Activated B cell treated with CpG ODN at 0.5 μM for 24 hours (primary cell): ENCODE measurements at regions of chr2 and their contacts with region 1.

Region 1: DNA sequence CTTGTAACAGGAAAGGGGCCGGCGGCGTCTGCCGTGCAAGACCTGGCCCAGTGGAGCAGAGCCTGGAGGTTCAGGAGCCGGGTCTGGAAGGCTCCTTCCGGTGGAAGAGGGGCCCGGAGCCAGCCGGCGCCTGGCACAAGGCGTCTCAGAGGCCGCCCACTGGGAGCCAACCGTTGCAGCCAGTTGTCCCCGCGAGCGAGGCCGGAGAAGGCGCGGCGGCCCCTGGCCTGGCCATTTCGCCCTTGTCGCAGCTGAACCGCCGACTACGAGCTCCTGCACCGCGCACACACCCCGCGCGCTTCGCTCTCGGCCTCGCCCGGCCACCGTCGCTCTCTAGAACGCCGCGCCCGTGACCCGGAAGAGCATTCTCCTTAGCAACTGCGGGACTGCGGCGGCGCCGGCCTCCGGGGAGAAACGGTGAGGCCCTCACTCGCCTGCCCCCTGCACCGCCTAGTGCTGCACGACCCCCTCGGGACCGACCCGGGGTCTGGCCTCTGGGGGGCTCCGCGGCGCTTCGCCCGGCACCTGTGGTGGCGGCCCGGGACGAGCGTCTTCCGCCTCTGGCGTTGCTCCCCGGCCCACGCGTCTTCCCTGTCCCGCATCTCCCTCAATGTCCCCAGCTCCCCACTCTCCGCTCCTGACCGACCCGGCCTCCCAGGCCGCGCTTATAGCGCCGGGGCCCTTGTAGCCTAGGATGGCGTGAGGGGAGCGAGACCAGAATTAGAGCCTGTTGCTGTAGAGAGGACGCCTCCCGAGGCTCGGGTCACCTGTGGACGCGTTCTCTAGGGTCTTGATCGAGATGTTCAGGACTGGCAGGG is at the start of gene DIS3L2:
- DNase-seq: peak; percentile 74
- ATAC-seq: peak; percentile 95
- H3K4me3 Mint-ChIP-seq: peak within 1 kb of the TSS; percentile 97
- H3K27ac Mint-ChIP-seq: peak within 1 kb of the TSS; percentile 80
- H3K4me1 Mint-ChIP-seq: peaks cover 37% of the 10 kb centered on the region
- H3K27me3 Mint-ChIP-seq: no peaks in the 10 kb centered on the region
- CTCF ChIP-seq: no peak
- total RNA-seq, gene DIS3L2: 59.9 and 65.9 TPM in 2 replicates

Region 2: GRCh38 chr2:231883468-231883881 is 78.1 kb before region 1 on chr2:
- CTCF ChIA-PET with region 1: no interaction called
- POLR2A ChIA-PET with region 1: no interaction called
- intact Hi-C with region 1: no loop called
- DNase-seq: no peak
- ATAC-seq: no peak
- H3K4me3 Mint-ChIP-seq: no peak overlapping the region
- H3K27ac Mint-ChIP-seq: no peak overlapping the region
- H3K4me1 Mint-ChIP-seq: no peaks in the 10 kb centered on the region
- H3K27me3 Mint-ChIP-seq: peaks cover 38% of the 10 kb centered on the region
- CTCF ChIP-seq: no peak

Region 3: GRCh38 chr2:231925303-231926179 is 36.0 kb before region 1 on chr2:
- CTCF ChIA-PET with region 1: no interaction called
- POLR2A ChIA-PET with region 1: no interaction called
- intact Hi-C with region 1: loop called (anchors 5 kb)
- DNase-seq: peak; percentile 71
- ATAC-seq: peak; percentile 70
- H3K4me3 Mint-ChIP-seq: peak overlapping the region; percentile 65
- H3K27ac Mint-ChIP-seq: no peak overlapping the region
- H3K4me1 Mint-ChIP-seq: peaks cover 13% of the 10 kb centered on the region
- H3K27me3 Mint-ChIP-seq: peaks cover 47% of the 10 kb centered on the region
- CTCF ChIP-seq: no peak

Region 4: GRCh38 chr2:231946241-231946814 is 15.2 kb before region 1 on chr2:
- CTCF ChIA-PET with region 1: no interaction called
- POLR2A ChIA-PET with region 1: no interaction called
- intact Hi-C with region 1: no loop called
- DNase-seq: no peak
- ATAC-seq: no peak
- H3K4me3 Mint-ChIP-seq: no peak overlapping the region
- H3K27ac Mint-ChIP-seq: no peak overlapping the region
- H3K4me1 Mint-ChIP-seq: no peaks in the 10 kb centered on the region
- H3K27me3 Mint-ChIP-seq: peaks cover 7% of the 10 kb centered on the region
- CTCF ChIP-seq: no peak

Region 5: GRCh38 chr2:232563580-232563979 is 602.0 kb after region 1 on chr2:
- CTCF ChIA-PET with region 1: no interaction called
- POLR2A ChIA-PET with region 1: no interaction called
- intact Hi-C with region 1: loop called (anchors 5 kb)
- DNase-seq: no peak
- ATAC-seq: no peak
- H3K4me3 Mint-ChIP-seq: no peak overlapping the region
- H3K27ac Mint-ChIP-seq: peak overlapping the region; percentile 12
- H3K4me1 Mint-ChIP-seq: peaks cover 18% of the 10 kb centered on the region
- H3K27me3 Mint-ChIP-seq: no peaks in the 10 kb centered on the region
- CTCF ChIP-seq: no peak